Calu3 (cell line): ENCODE measurements at regions of chr1 and their contacts with region 1.

Region 1: GRCh38 chr1:175154629-175155472 is 37.7 kb downstream of the KIAA0040 start:
- DNase-seq: peak; percentile 85
- H3K4me3 Mint-ChIP-seq: no peak overlapping the region
- H3K27ac Mint-ChIP-seq: no peak overlapping the region
- H3K4me1 Mint-ChIP-seq: peaks cover 21% of the 10 kb centered on the region
- H3K27me3 Mint-ChIP-seq: peaks cover 45% of the 10 kb centered on the region
- CTCF ChIP-seq: peak; percentile 85

Region 2: GRCh38 chr1:175169305-175170018 is 14.6 kb after region 1 on chr1:
- CTCF ChIA-PET with region 1: interaction called, 6 read pairs
- intact Hi-C with region 1: loop called (anchors 1 kb)
- DNase-seq: no peak
- H3K4me3 Mint-ChIP-seq: no peak overlapping the region
- H3K27ac Mint-ChIP-seq: no peak overlapping the region
- H3K4me1 Mint-ChIP-seq: peaks cover 34% of the 10 kb centered on the region
- H3K27me3 Mint-ChIP-seq: no peaks in the 10 kb centered on the region
- CTCF ChIP-seq: no peak

Region 3: DNA sequence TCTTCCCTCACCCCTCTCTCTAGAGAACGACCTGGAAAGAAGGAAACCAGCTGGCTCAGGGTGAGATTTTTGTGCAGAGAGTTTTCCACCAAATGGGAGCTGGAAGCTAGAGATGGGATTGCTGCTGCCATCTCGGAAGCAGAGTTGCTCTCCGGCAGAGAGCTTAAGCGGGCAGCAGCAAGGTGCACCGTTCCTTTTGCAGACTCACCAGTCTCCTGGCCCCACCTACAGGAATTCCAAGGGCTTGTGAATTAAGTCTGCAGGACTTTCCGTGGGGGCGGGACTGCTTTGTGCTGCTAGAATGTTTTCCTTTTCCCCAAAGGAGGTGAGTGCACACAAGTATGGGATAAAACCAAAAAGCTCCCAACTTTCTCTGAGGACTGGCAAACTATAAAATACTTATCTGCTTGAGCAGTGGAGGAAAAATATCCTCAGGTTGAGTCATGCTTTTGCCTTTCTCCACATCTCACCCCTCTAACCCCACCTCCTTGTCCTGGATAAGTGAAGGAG is 66.9 kb after region 1 on chr1:
- CTCF ChIA-PET with region 1: interaction called, 37 read pairs
- intact Hi-C with region 1: loop called (anchors 1 kb)
- DNase-seq: peak; percentile 71
- H3K4me3 Mint-ChIP-seq: no peak overlapping the region
- H3K27ac Mint-ChIP-seq: no peak overlapping the region
- H3K4me1 Mint-ChIP-seq: peaks cover 8% of the 10 kb centered on the region
- H3K27me3 Mint-ChIP-seq: no peaks in the 10 kb centered on the region
- CTCF ChIP-seq: no peak

Region 4: DNA sequence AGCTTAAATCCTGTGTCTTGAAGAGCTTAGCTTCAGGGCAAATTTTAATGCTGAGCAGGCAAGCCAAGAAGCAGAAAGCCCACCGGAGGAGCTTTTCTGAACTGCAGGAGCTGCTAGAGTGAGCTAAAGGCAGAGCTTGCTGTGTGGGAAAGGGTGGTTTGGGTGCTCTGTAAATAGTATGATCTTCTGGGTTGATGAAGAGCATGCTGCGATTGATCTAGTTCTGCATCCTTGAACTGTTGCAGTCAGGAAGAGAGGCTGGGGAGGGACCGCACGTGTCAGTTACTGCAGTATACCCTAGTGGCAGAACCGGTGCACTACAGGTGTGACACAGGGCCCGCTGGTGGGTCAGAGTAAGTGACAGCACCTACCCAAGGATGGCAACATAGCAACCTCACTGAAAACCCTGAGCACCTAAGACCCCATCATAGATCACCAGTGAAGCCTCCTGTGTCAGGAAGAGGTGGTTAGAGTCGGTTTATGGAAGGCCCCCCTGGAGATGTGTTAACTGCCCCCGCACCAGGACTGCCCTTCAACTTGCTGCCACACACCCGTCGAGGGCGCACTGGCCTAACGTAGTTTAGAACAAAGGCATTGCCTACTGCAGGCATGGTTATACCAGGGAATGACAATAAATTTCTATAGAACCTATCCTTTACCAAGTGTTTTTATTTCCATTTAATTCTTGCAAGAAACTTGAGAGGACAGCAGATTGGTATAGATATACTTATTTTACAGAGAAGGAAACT is 183.7 kb after region 1 on chr1:
- CTCF ChIA-PET with region 1: interaction called, 12 read pairs
- intact Hi-C with region 1: no loop called
- DNase-seq: peak; percentile 66
- H3K4me3 Mint-ChIP-seq: no peak overlapping the region
- H3K27ac Mint-ChIP-seq: no peak overlapping the region
- H3K4me1 Mint-ChIP-seq: no peaks in the 10 kb centered on the region
- H3K27me3 Mint-ChIP-seq: peaks cover 87% of the 10 kb centered on the region
- CTCF ChIP-seq: peak; percentile 63

Region 5: DNA sequence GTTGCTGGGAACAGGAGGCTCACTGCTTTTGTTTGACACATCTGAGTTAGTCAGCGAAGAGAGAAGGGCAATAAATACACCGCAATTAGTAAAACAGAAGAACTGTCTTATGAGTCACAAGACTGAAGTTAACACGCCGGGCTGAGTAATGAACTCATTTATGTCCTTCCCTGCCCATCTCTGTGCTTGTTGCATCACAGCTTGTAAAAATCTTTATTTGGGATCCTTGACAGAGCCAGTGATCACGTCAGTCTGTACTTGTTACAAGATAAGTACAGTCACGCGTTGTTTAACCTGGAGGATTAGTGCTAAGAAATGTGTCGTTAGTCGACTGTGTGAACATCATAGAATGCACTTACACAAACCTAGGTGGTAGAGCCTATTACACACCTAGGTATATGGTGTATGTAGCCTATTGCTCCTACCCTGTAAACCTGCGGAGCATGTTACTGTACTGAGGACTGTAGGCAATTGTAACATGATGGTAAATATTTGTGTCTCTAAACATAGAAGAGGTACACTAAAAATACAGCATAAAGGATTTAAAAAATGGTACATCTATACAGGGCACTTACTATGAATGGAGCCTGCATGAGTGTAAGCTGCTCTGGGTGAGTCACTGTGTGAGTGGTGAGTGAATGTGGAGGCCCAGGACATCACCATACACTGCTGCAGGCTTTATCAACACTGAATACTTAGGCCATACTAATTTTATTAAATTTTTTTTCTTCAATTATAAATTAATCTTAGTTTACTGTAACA is 316.4 kb after region 1 on chr1:
- CTCF ChIA-PET with region 1: no interaction called
- intact Hi-C with region 1: loop called (anchors 2 kb)
- DNase-seq: no peak
- H3K4me3 Mint-ChIP-seq: no peak overlapping the region
- H3K27ac Mint-ChIP-seq: no peak overlapping the region
- H3K4me1 Mint-ChIP-seq: no peaks in the 10 kb centered on the region
- H3K27me3 Mint-ChIP-seq: peaks cover 96% of the 10 kb centered on the region
- CTCF ChIP-seq: no peak